ENCODE measurements at regions of chr18 and their contacts with region 1.

Region 1: DNA sequence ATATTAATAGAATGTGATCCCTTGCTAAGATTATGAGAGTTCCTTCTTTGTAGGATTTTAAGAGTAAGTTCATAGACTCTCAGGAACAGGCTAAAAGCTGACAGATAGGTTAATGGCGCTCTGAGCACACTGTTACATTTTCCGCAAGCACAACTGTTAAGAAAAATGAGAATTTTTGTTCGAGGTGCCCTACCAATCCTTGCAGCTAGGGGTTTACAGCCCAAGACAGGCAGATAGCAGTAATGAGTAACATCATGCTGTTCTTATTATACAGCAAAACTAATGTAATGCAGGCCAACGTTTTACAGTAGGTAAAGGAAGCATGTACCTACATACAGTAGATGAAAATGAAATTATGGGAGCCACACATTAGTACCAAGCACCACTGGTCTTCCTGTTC is 11.2 kb upstream of the BOD1L2 start:
- DNase-seq: no peak
- ATAC-seq: no peak
- H3K4me3 Mint-ChIP-seq: no peak overlapping the region
- H3K27ac Mint-ChIP-seq: no peak overlapping the region
- H3K4me1 Mint-ChIP-seq: peaks cover 9% of the 10 kb centered on the region
- H3K27me3 Mint-ChIP-seq: no peaks in the 10 kb centered on the region
- CTCF ChIP-seq: 0 out of 2 replicates have a peak, but pooled peaks have one; percentile 17

Region 2: DNA sequence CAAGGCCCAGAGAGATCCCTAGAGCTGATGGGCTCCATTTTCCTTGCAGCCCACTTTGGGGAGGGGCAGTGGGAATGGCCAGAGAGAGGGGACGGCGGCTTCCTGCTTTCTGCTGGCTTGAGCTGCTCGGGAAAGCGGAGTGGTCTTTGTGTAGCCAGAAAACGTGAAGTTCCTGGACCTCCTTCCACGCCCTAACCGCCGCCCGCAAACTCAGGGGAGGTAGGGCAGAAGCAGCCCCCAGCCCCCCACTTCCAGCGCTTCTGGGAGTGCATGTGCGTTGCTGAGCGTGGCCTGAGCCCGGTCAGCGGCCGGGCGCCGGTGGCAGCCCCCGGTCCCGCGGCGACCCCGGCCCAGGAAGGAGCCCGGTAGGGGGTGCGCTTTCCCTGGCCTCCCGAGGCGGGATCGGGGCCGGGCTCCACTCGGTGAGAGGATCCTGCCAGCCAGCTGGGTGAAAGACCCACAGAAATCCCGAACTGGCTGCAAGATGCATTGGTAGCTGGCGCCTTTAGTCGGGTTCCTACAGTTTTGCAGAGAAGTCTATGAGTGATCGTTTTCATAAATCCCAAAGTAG is 14.1 kb before region 1 on chr18:
- CTCF ChIA-PET with region 1: interaction called, 24 read pairs
- POLR2A ChIA-PET with region 1: interaction called, 5 read pairs
- DNase-seq: peak; percentile 50
- ATAC-seq: peak; percentile 69
- H3K4me3 Mint-ChIP-seq: peak overlapping the region; percentile 67
- H3K27ac Mint-ChIP-seq: peak overlapping the region; percentile 70
- H3K4me1 Mint-ChIP-seq: peaks cover 45% of the 10 kb centered on the region
- H3K27me3 Mint-ChIP-seq: no peaks in the 10 kb centered on the region
- CTCF ChIP-seq: no peak